CD4-positive, alpha-beta memory T cell (primary cell): ENCODE measurements at regions of chr14 and their contacts with region 1.

Region 1: GRCh38 chr14:74684434-74684833 is 28.4 kb downstream of the AREL1 start:
- DNase-seq: no peak
- H3K4me3 ChIP-seq: no peak overlapping the region
- H3K4me3 Mint-ChIP-seq: no peak overlapping the region
- H3K27ac ChIP-seq: no peak overlapping the region
- H3K27ac Mint-ChIP-seq: peak overlapping the region in 3 of 7 donors; percentile 14 to 43 (median 26)
- H3K4me1 ChIP-seq: no peaks in the 10 kb centered on the region
- H3K4me1 Mint-ChIP-seq: peaks cover 6 to 16% (median 10%) of the 10 kb centered on the region in 4 donors
- H3K27me3 ChIP-seq: no peaks in the 10 kb centered on the region
- H3K27me3 Mint-ChIP-seq: no peaks in the 10 kb centered on the region

Region 2: DNA sequence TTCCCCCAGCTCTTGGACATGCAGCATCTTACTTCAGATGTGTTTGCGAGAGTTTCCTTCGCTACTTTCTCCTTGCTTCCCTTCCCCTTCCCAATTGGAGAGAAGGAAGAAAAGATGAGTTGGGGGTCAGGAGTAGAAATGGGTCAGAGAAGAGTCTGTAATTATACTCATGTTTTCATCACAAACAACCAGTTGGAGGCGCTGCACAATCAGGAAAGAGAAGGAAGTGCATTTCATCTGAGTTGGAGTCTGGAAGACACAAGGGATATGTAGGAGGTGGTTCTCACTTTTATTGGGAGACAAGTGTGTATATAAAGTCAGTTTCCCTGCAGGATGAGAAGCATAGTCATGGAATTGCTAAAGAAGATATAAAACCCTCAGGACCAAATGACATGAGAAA is 476.5 kb before region 1 on chr14:
- CTCF ChIA-PET with region 1: no interaction called
- POLR2A ChIA-PET with region 1: no interaction called
- intact Hi-C with region 1: no loop called
- DNase-seq: no peak
- H3K4me3 ChIP-seq: no peak overlapping the region
- H3K4me3 Mint-ChIP-seq: no peak overlapping the region
- H3K27ac ChIP-seq: no peak overlapping the region
- H3K27ac Mint-ChIP-seq: no peak overlapping the region
- H3K4me1 ChIP-seq: no peaks in the 10 kb centered on the region
- H3K4me1 Mint-ChIP-seq: no peaks in the 10 kb centered on the region
- H3K27me3 ChIP-seq: no peaks in the 10 kb centered on the region
- H3K27me3 Mint-ChIP-seq: peaks cover 0 to 2% of the 10 kb centered on the region in 2 donors

Region 3: GRCh38 chr14:74627076-74627475 is 57.4 kb before region 1 on chr14:
- CTCF ChIA-PET with region 1: no interaction called
- POLR2A ChIA-PET with region 1: no interaction called
- intact Hi-C with region 1: no loop called
- DNase-seq: no peak
- H3K4me3 ChIP-seq: no peak overlapping the region
- H3K4me3 Mint-ChIP-seq: peak overlapping the region in 1 of 8 donors; percentile 10
- H3K27ac ChIP-seq: no peak overlapping the region
- H3K27ac Mint-ChIP-seq: no peak overlapping the region
- H3K4me1 ChIP-seq: no peaks in the 10 kb centered on the region
- H3K4me1 Mint-ChIP-seq: peaks cover 0 to 2% (median 1%) of the 10 kb centered on the region in 4 donors
- H3K27me3 ChIP-seq: no peaks in the 10 kb centered on the region
- H3K27me3 Mint-ChIP-seq: peaks cover 0 to 2% of the 10 kb centered on the region in 2 donors

Region 4: GRCh38 chr14:74816124-74816523 is 131.7 kb after region 1 on chr14:
- CTCF ChIA-PET with region 1: no interaction called
- POLR2A ChIA-PET with region 1: no interaction called
- intact Hi-C with region 1: loop called (anchors 10 kb)
- DNase-seq: no peak
- H3K4me3 ChIP-seq: no peak overlapping the region
- H3K4me3 Mint-ChIP-seq: no peak overlapping the region
- H3K27ac ChIP-seq: no peak overlapping the region
- H3K27ac Mint-ChIP-seq: peak overlapping the region in 1 of 7 donors; percentile 46
- H3K4me1 ChIP-seq: no peaks in the 10 kb centered on the region
- H3K4me1 Mint-ChIP-seq: peaks cover 4 to 8% (median 6%) of the 10 kb centered on the region in 4 donors
- H3K27me3 ChIP-seq: no peaks in the 10 kb centered on the region
- H3K27me3 Mint-ChIP-seq: no peaks in the 10 kb centered on the region

Region 5: DNA sequence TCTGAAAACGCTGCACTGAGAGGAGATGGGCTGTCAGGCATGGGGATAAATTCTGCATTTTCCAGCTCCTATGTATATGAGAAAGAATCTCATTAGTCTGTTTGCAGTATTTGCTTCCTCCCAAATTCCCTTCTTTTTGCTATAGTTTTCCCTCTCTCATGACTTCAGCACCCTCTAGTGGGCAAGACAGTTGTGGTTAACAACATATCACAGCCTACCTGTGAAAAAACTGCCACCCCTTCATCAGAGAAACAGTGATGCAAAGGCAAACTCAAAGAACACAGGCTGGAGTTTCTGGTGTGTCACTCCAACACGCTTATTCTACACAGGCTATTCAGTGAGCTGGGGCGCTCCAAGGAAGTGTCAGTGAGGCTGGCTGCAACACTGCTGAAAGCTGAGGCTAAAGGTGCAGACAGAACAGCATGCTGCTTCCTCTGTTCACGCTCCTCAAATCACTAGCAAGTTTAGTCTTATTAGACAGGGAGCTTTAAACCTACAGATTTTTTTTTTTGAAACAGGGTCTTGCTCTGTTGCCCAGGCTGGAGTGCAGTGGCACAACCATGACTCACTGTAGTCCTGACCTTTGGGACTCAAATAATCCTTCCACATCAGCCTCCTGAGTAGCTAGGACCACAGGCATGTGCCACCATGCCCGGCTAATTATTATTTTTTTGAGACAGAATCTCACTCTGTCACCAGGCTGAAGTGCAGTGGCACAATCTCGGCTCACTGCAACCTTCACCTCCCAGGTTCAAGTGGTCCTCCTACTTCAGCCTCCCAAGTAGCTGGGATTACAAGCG is 404.3 kb after region 1 on chr14:
- CTCF ChIA-PET with region 1: no interaction called
- POLR2A ChIA-PET with region 1: no interaction called
- intact Hi-C with region 1: no loop called
- DNase-seq: peak; percentile 37 to 48 (median 46)
- H3K4me3 ChIP-seq: no peak overlapping the region
- H3K4me3 Mint-ChIP-seq: no peak overlapping the region
- H3K27ac ChIP-seq: no peak overlapping the region
- H3K27ac Mint-ChIP-seq: peak overlapping the region in 1 of 7 donors; percentile 47
- H3K4me1 ChIP-seq: no peaks in the 10 kb centered on the region
- H3K4me1 Mint-ChIP-seq: no peaks in the 10 kb centered on the region
- H3K27me3 ChIP-seq: no peaks in the 10 kb centered on the region
- H3K27me3 Mint-ChIP-seq: no peaks in the 10 kb centered on the region